Colonic mucosa (tissue), 4 donors: ENCODE measurements at regions of chr13 and their contacts with region 1.

Region 1: GRCh38 chr13:73081256-73081915 is 22.6 kb downstream of the KLF5 start:
- DNase-seq: no peak
- H3K4me3 ChIP-seq: no peak overlapping the region
- H3K27ac ChIP-seq: no peak overlapping the region
- H3K4me1 ChIP-seq: no peaks in the 10 kb centered on the region
- H3K27me3 ChIP-seq: no peaks in the 10 kb centered on the region
- CTCF ChIP-seq: no peak

Region 2: DNA sequence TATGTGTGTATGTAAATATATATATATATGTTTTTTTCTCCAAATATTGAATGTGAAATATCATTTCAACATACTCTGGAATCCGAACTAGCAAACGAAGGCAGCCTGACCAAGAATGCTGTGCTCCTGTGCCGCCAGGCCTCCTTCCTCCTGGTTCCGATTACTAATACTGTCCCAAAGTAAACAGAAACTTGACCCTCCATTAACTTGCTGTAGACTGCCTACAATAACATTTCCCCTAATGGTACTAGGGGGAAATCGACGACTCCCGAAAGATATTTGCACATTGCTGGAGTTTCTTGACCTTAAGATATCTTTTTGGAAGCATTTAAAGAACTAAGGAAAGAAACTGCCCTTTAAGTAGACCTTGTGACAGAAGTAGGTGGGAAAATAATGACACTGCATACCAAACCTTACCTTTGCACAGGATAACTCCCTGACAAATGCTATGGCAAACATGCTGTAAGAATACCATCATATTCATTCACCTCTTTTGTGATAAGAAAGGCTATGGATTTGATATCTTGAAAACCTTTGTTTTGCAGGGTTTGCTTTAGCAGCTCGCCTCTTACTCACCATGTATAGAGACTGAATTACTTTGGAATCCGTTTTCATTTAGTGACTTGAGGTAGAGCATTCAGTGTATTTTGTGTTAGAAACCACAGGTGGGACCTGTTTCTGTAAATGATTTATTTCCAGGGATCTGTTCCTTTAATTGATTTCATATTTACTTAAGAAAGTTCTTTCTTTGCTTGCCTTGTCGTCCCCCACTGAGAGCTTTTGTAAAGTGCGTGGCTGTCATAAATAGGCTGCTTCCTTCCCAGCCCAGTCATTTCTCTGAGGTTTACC is 57.5 kb after region 1 on chr13:
- intact Hi-C with region 1: loop called (anchors 10 kb)
- DNase-seq: peak; percentile 51
- H3K4me3 ChIP-seq: no peak overlapping the region
- H3K27ac ChIP-seq: peak overlapping the region; percentile 79
- H3K4me1 ChIP-seq: peaks cover 10% of the 10 kb centered on the region
- H3K27me3 ChIP-seq: no peaks in the 10 kb centered on the region
- CTCF ChIP-seq: no peak